Activated naive CD4-positive, alpha-beta T cell treated with anti-CD3 and anti-CD28 coated beads for 36 hours (primary cell): ENCODE measurements at regions of chr14 and their contacts with region 1.

Region 1: DNA sequence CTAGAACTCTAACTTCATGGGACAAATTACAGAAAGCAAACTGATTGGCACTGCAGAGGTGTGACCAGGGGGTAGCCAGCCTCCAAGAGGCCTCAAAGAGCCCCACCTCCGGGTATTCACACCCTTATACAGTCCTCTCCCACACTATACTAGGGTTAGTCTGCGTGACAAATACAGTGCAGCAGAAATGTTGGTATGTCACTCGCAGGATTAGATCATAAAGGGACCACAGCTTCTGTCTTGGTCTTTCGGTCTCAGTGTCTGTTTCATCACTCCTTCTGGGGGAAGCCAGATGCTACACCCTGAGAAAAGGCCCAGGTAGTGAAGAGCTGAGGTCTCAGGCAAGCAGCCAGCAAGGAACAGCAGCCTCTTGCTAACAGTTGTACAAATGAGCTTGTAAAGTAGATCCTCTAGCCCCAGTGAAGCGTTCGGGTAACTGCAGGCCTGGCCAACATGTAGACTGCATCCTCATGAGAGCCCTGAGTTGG is 68.9 kb upstream of the SAV1 start:
- DNase-seq: peak; percentile 58
- H3K4me3 Mint-ChIP-seq: no peak overlapping the region
- H3K27ac Mint-ChIP-seq: no peak overlapping the region
- H3K4me1 Mint-ChIP-seq: peaks cover 38% of the 10 kb centered on the region
- H3K27me3 Mint-ChIP-seq: no peaks in the 10 kb centered on the region

Region 2: DNA sequence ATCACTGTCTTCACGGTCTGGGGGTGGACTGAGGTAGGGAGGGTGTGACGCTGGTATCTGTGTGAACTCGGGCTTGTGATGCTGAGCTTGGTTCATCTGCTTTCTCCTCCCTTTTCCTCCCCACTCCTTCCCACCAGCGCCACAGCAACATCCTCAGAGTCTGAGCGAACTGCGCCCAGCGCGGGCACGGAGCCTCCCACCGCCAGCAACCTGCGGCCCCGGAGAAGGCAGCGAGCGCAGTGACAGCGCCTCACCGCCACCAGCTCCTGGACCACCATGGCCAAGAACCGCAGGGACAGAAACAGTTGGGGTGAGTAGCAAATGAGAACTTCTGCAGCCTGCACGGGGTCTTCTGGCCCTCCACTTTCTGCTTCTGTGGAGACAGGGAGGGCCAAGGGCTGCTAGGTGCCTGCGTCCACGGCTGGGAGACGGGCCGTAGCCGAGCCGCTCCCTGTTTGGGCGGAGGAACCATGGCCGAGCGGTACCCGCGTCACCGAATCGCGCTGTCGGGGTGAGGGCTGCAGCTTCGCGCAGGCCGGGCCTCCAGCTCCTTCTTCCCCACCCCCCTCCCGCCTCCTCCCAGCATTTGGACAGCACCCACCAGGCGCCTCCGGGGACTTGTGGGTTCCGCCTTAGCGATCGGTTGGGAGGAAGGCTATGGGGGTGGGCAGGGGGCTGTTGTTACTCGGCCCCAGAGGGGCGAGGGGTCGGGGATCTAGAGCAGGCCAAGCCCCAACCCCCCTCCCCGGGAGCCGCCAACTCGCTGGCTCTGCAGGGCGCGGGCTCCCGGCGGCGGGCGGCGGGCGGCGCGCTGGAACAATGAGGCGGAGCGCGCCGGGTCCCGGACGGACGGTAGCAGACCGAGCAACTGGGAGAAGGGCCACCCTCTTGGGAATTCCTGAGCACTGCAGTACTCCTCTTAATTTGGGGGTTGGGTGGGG is 176.7 kb before region 1 on chr14 and contains the start of gene ATL1:
- CTCF ChIA-PET with region 1: no interaction called
- intact Hi-C with region 1: loop called (anchors 1 kb)
- DNase-seq: peak; percentile 61
- H3K4me3 Mint-ChIP-seq: peak within 1 kb of the TSS; percentile 75
- H3K27ac Mint-ChIP-seq: no peak within 1 kb of the TSS
- H3K4me1 Mint-ChIP-seq: peaks cover 4% of the 10 kb centered on the region
- H3K27me3 Mint-ChIP-seq: peaks cover 35% of the 10 kb centered on the region
- total RNA-seq, gene ATL1: 1.0 TPM in 1 of 2 experiments, not detected in the other

Region 3: GRCh38 chr14:50762001-50762930 is 25.3 kb after region 1 on chr14:
- CTCF ChIA-PET with region 1: interaction called, 6 read pairs
- intact Hi-C with region 1: loop called (anchors 1 kb)
- DNase-seq: peak; percentile 74
- H3K4me3 Mint-ChIP-seq: no peak overlapping the region
- H3K27ac Mint-ChIP-seq: no peak overlapping the region
- H3K4me1 Mint-ChIP-seq: peaks cover 28% of the 10 kb centered on the region
- H3K27me3 Mint-ChIP-seq: no peaks in the 10 kb centered on the region